Ascending aorta (tissue), 2 donors: ENCODE measurements at regions of chr4 and their contacts with region 1.

Region 1: GRCh38 chr4:119212234-119212963 is at the start of gene USP53:
- DNase-seq: peak; percentile 94 to 99
- H3K4me3 ChIP-seq: peak within 1 kb of the TSS; percentile 84 to 91
- H3K27ac ChIP-seq: peak within 1 kb of the TSS; percentile 98
- H3K4me1 ChIP-seq: peaks cover 0 to 4% of the 10 kb centered on the region in 2 donors
- H3K27me3 ChIP-seq: no peaks in the 10 kb centered on the region
- CTCF ChIP-seq: peak in 1 of 3 experiments; percentile 8
- total RNA-seq, gene USP53: 75.4 TPM

Region 2: GRCh38 chr4:118765399-118765798 is 447.0 kb before region 1 on chr4:
- intact Hi-C with region 1: loop called (anchors 10 kb)
- DNase-seq: no peak
- H3K4me3 ChIP-seq: no peak overlapping the region
- H3K27ac ChIP-seq: peak overlapping the region; percentile 76 to 87
- H3K4me1 ChIP-seq: peaks cover 17 to 62% of the 10 kb centered on the region in 2 donors
- H3K27me3 ChIP-seq: no peaks in the 10 kb centered on the region
- CTCF ChIP-seq: no peak

Region 3: DNA sequence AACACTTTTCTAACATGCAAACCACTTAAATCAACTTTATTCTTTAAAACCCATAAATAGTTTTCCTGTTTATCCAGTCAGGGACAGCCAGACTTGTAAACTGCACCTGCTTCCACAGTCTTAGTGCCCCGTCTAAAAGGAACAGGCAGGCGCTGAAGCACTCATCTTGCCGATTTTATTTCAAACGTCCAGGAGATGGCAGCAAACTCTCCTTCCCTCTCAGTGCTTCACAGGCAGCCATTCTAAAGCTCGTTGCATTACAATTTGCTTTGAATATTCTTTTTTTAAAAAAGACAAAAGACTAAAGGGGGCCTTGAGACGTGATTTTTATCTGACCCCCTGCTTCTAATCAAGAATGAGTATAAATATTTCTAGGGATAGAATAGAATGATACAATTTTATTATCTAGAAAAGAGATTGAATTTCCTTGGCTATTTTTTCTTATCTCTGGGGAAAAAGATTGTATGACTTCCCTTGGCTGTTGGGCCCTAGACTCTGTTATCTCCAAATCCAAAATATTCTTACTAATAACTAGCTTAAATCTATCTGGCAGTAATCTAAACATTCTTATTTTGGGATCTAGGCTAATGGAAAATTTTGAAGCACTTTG is 170.3 kb before region 1 on chr4:
- intact Hi-C with region 1: loop called (anchors 1 kb)
- DNase-seq: peak in 1 of 2 donors; percentile 80
- H3K4me3 ChIP-seq: no peak overlapping the region
- H3K27ac ChIP-seq: peak overlapping the region; percentile 95 to 96
- H3K4me1 ChIP-seq: peaks cover 4 to 76% of the 10 kb centered on the region in 2 donors
- H3K27me3 ChIP-seq: no peaks in the 10 kb centered on the region
- CTCF ChIP-seq: peak; percentile 56 to 70 (median 59)

Region 4: GRCh38 chr4:119138046-119138445 is 74.4 kb before region 1 on chr4:
- intact Hi-C with region 1: loop called (anchors 5 kb)
- DNase-seq: no peak
- H3K4me3 ChIP-seq: no peak overlapping the region
- H3K27ac ChIP-seq: no peak overlapping the region
- H3K4me1 ChIP-seq: peaks cover 0 to 31% of the 10 kb centered on the region in 2 donors
- H3K27me3 ChIP-seq: no peaks in the 10 kb centered on the region
- CTCF ChIP-seq: no peak

Region 5: GRCh38 chr4:119189638-119190037 is 22.8 kb before region 1 on chr4:
- intact Hi-C with region 1: loop called (anchors 2 kb)
- DNase-seq: no peak
- H3K4me3 ChIP-seq: peak overlapping the region in 1 of 2 donors; percentile 24
- H3K27ac ChIP-seq: peak overlapping the region; percentile 58 to 69
- H3K4me1 ChIP-seq: peaks cover 2 to 11% of the 10 kb centered on the region in 2 donors
- H3K27me3 ChIP-seq: no peaks in the 10 kb centered on the region
- CTCF ChIP-seq: no peak